Left lung (tissue), 14 donors: ENCODE measurements at regions of chr17 and their contacts with region 1.

Region 1: DNA sequence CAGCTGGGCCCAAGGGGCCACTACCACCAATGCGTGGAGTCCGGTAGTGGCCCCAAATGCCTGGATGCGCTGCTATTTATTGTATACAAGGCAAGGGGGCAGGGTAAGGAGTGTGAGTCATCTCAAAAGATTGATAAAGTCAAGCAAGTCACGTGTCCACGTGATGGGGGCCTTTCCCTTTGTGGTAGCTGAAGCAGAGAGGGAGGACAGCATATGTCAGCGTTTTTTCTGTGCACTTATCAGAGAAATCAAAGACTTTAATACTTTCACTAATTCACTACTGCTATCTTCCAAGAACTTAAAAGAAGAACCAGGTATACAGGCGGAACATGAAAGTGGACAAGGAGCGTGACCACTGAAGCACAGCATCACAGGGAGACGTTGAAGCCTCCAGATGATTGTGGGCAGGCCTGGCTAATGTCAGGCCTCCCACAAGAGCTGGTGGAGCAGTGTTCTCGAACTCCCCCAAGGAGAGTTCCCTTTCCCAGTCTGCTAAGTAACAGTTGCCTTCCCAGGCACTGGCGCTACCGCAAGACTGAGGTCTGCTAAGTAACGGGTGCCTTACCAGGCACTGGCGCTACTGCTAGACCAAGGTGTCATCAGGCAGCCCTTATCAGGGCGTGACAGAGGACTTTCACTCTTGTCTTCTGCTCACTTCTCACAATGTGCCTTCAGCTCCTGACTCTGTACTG is 10.8 kb upstream of the ASB16 start:
- DNase-seq: peak in 1 of 4 donors; percentile 20
- ATAC-seq: no peak
- H3K4me3 ChIP-seq: no peak overlapping the region
- H3K27ac ChIP-seq: no peak overlapping the region
- H3K4me1 ChIP-seq: no peaks in the 10 kb centered on the region
- H3K27me3 ChIP-seq: no peaks in the 10 kb centered on the region
- CTCF ChIP-seq: no peak

Region 2: GRCh38 chr17:43940630-43941029 is 219.0 kb before region 1 on chr17:
- intact Hi-C with region 1: loop called in 1 of 2 experiments (anchors 10 kb)
- DNase-seq: peak in 1 of 4 donors; percentile 50
- ATAC-seq: no peak
- H3K4me3 ChIP-seq: no peak overlapping the region
- H3K27ac ChIP-seq: no peak overlapping the region
- H3K4me1 ChIP-seq: peaks cover 0 to 14% of the 10 kb centered on the region in 2 donors
- H3K27me3 ChIP-seq: peaks cover 11 to 44% of the 10 kb centered on the region in 2 donors
- CTCF ChIP-seq: peak in 1 of 2 donors; percentile 11